Dendritic cell treated with granulocyte-macrophage colony-stimulating factor and Interleukin-4, amounts not matched to agents 40 ng/mL and 50 ng/mL, for 4 days (primary cell): ENCODE measurements at regions of chr12 and their contacts with region 1.

Region 1: DNA sequence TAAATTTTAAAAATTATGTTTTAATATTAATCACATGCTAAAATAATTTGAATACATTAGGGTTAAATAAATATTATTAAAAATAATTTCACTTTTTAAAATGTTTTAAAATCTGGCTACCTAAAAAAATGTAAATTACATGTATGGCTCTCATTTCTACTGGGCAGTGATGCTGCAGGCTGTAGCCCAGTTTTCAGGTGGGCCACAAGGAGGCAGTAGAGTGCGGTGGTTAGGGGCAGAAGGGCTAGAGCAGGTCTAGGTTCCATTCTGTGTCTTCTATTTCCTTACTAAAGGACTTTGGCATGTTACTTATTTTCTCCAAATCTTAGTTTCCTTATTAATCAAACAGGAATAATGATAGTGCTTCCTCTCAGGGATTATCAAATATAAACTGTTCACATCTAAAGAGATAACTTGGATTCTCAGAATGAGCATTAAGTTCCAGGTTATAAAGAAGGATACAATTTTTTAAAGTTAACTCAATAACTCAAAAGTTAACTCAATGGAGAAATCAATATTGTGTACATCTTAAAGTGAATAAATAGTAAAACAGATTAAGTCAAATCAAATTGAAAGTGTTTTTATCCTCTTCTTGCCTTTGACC is 54.9 kb upstream of the OVCH1 start:
- H3K4me3 Mint-ChIP-seq: no peak overlapping the region
- H3K27ac Mint-ChIP-seq: no peak overlapping the region
- H3K4me1 Mint-ChIP-seq: no peaks in the 10 kb centered on the region
- H3K27me3 Mint-ChIP-seq: no peaks in the 10 kb centered on the region

Region 2: DNA sequence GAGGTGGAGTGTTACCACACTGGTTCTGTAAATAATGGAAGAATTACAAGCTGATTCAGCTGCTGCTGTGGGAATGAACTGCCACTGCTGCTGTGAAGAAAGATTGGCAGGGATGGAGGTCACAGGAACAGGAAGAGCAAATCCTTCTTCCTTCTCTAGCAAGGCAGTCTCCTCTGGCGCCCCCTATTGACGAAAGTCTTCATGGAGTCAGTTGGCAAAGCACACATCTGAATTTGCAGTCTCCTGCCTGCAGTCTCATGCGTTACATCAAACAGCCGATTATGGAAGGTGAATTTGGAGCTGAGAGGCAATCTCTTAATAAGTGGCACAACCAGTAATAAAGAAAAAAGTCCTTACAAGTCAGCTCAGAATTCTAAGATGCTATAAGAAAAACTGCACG is 337.3 kb after region 1 on chr12:
- intact Hi-C with region 1: loop called (anchors 1 kb)
- H3K4me3 Mint-ChIP-seq: no peak overlapping the region
- H3K27ac Mint-ChIP-seq: no peak overlapping the region
- H3K4me1 Mint-ChIP-seq: no peaks in the 10 kb centered on the region
- H3K27me3 Mint-ChIP-seq: no peaks in the 10 kb centered on the region

Region 3: GRCh38 chr12:30806989-30807694 is 1254.7 kb after region 1 on chr12:
- intact Hi-C with region 1: loop called (anchors 1 kb)
- H3K4me3 Mint-ChIP-seq: no peak overlapping the region
- H3K27ac Mint-ChIP-seq: no peak overlapping the region
- H3K4me1 Mint-ChIP-seq: peaks cover 7% of the 10 kb centered on the region
- H3K27me3 Mint-ChIP-seq: peaks cover 8% of the 10 kb centered on the region